ENCODE measurements at regions of chr9 and their contacts with region 1.

Region 1: DNA sequence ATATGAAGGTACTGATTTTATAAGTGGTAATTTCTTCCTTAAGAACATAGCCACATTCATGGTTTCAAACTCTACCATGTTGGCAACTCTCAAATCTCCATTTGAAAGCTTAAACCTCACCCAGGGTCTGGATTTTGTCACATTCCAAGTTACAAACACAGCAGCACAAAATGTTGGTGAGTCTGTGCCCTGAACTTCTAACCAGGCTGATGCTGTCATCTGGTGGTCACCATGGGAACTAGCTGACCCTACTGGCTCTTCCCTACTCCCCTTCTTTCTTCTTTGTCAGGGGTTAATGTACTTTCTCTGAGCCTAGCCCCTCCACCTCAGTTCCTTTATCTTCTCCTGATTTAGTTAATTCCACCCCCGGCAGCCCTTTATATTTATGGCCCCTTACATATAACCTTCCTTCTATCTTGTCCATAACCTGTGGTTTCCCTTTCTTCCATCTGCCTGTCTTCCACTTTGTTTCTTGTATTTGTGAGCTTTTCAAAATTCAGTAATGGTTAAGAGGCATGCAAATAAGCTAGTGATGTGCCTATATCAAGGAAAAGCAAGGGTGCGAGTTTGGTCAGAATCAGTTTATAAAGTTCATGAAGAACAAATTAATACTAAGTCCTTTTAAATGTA is 35.9 kb downstream of the TGFBR1 start:
- DNase-seq: no peak
- H3K4me3 ChIP-seq: no peak overlapping the region
- CTCF ChIP-seq: peak in 1 of 3 donors; percentile 75
- POLR2A ChIP-seq: no peak

Region 2: DNA sequence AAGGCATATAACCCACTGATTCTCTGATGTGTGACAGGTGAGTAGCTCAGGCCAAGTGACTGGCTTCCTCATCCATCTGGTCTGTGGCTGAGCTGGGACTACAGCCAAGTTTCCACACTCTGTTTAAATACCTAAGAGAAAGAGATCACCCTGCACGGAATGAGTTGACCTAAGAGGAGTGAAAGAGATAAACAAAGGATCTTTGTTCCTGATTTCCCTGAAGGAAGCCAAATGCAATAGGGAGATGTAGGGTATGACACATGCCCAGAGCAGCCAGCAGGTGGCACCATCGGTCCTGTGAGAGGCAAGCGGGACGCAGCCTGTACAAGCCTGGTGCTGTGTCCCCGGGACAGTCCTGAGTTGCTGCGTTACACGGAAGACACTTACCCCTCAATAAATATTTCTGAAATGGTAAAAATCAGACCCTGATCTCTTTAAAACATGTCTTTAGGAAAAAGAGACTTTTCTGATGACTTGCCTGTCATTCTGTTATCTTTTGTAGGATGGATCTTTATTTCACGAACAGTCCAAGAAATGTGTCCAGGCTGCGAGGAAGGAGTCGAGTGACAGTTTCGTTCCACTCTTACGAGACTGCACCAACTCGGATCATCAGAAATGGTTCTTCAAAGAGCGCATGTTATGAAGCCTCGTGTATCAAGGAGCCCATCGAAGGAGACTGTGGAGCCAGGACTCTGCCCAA is 292.2 kb before region 1 on chr9:
- intact Hi-C with region 1: loop called (anchors 10 kb)
- DNase-seq: peak; percentile 87 to 97
- H3K4me3 ChIP-seq: no peak overlapping the region
- CTCF ChIP-seq: peak in 1 of 3 donors; percentile 82
- POLR2A ChIP-seq: no peak